ENCODE measurements at regions of chr1 and their contacts with region 1.

Region 1: DNA sequence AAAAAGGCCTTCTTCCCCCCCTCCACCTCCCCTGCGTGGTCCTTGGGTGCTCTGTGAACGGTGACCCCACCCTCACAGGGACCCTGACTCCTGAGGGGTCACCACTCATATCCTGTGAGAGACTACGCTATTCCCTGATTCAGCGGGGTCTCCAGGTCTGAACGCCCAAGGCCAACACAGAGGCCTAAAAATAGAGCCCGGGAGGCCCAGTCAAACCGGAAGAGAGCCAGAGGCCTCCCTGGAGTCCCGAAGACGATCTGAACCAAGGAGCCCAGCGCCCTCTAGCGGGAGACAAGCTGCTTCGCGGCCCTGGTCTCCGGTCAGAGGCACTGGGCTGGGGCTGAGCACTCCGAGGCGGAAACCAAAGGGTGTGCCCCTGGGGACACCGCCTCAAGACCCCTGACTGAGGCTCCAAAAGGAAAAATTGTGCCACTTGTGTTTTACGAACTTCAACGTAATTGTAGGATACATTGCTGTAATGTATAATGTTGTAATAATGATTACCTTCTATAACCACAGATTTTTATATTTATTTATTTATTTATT is 42.4 kb upstream of the PSEN2 start:
- DNase-seq: peak; percentile 82 to 94 (median 91)
- ATAC-seq: peak; percentile 99
- H3K4me3 ChIP-seq: peak overlapping the region; percentile 34
- H3K4me3 Mint-ChIP-seq: peak overlapping the region; percentile 35 to 79 (median 66)
- H3K27ac ChIP-seq: peak overlapping the region; percentile 59
- H3K27ac Mint-ChIP-seq: peak overlapping the region; percentile 80 to 95 (median 87)
- H3K4me1 ChIP-seq: peaks cover 9 to 11% of the 10 kb centered on the region in 2 donors
- H3K4me1 Mint-ChIP-seq: peaks cover 24 to 54% (median 45%) of the 10 kb centered on the region in 7 donors
- H3K27me3 ChIP-seq: no peaks in the 10 kb centered on the region
- H3K27me3 Mint-ChIP-seq: peaks cover 0 to 4% (median 0%) of the 10 kb centered on the region in 5 donors

Region 2: DNA sequence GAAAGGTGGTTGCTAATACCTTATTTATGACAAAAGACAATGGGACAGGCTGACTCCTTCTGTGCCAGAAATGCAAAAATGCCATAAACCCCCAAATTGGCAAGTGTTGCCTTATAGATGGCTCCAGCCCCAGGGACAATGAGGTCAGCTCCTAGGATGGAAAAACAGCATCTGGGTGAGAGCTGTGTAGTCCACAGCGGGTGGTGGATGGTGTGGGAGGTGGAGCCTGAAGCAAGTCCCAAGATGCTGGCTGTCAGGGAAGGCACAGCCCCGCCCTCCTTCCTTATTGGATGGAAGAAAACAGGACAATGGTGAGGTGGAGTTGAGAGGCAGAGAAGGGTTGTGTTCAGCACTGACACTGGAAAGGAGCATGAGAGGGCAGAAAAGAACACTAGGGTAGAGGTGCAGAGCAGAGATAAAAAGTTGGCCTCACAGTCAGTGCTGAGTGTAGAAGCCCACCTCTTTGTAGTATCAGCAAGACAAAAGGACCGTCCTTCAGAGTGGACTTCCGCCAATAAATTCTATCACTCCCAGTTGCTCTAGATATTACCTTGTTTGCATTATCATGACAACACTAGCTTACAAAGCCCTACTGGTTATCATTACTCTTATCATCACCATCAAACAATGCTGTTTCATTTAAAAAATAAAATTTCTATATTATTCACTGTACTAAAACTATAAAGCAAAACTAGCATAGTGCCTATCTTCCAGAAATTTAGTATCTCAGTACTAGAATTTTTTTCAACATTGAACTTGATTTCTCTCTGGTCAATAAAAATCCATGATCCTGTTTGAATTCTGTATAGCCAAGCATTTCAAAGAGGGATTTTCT is 825.2 kb before region 1 on chr1:
- CTCF ChIA-PET with region 1: no interaction called
- POLR2A ChIA-PET with region 1: no interaction called
- intact Hi-C with region 1: no loop called
- DNase-seq: peak in 1 of 9 donors; percentile 55
- ATAC-seq: no peak
- H3K4me3 ChIP-seq: peak overlapping the region; percentile 5
- H3K4me3 Mint-ChIP-seq: peak overlapping the region; percentile 37 to 94 (median 69)
- H3K27ac ChIP-seq: peak overlapping the region; percentile 98
- H3K27ac Mint-ChIP-seq: peak overlapping the region; percentile 90 to 100 (median 100)
- H3K4me1 ChIP-seq: peaks cover 32 to 53% of the 10 kb centered on the region in 2 donors
- H3K4me1 Mint-ChIP-seq: peaks cover 31 to 66% (median 49%) of the 10 kb centered on the region in 7 donors
- H3K27me3 ChIP-seq: no peaks in the 10 kb centered on the region
- H3K27me3 Mint-ChIP-seq: no peaks in the 10 kb centered on the region

Region 3: DNA sequence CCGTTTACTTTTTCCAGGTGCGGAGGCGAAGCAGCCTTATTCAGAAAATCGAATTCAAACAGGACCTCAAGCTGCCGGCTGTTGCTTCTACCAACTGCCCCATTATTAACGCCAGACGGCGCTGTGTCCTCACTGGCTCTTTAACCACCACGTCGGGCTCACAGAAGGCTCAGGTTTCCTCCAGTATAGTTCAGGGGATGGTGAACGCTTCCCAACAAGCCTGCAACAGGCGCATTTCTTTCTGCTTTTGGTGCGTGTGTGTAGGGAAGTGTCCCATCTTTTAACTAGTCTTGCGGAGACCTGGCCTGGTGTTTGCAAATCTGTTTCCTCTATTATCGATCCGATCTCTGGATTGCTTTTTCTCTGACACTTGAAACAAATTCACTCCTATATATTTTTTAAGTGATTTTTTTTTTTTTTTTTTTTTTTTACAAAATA is 280.3 kb before region 1 on chr1:
- CTCF ChIA-PET with region 1: no interaction called
- POLR2A ChIA-PET with region 1: no interaction called
- intact Hi-C with region 1: loop called in 1 of 2 experiments (anchors 5 kb)
- DNase-seq: peak in 8 of 9 donors; percentile 17 to 56 (median 50)
- ATAC-seq: peak; percentile 75
- H3K4me3 ChIP-seq: no peak overlapping the region
- H3K4me3 Mint-ChIP-seq: peak overlapping the region in 9 of 10 donors; percentile 17 to 70 (median 51)
- H3K27ac ChIP-seq: no peak overlapping the region
- H3K27ac Mint-ChIP-seq: no peak overlapping the region
- H3K4me1 ChIP-seq: peaks cover 15 to 17% of the 10 kb centered on the region in 2 donors
- H3K4me1 Mint-ChIP-seq: peaks cover 0 to 19% (median 10%) of the 10 kb centered on the region in 7 donors
- H3K27me3 ChIP-seq: no peaks in the 10 kb centered on the region
- H3K27me3 Mint-ChIP-seq: peaks cover 37 to 77% (median 39%) of the 10 kb centered on the region in 5 donors

Region 4: GRCh38 chr1:226634166-226634588 is 193.9 kb before region 1 on chr1:
- CTCF ChIA-PET with region 1: interaction called, 60 read pairs
- POLR2A ChIA-PET with region 1: interaction called, 5 read pairs
- intact Hi-C with region 1: loop called (anchors 1 kb)
- DNase-seq: peak; percentile 69 to 86 (median 79)
- ATAC-seq: peak; percentile 89
- H3K4me3 ChIP-seq: no peak overlapping the region
- H3K4me3 Mint-ChIP-seq: peak overlapping the region; percentile 10 to 90 (median 64)
- H3K27ac ChIP-seq: peak overlapping the region; percentile 54
- H3K27ac Mint-ChIP-seq: peak overlapping the region; percentile 76 to 98 (median 90)
- H3K4me1 ChIP-seq: peaks cover 26 to 48% of the 10 kb centered on the region in 2 donors
- H3K4me1 Mint-ChIP-seq: peaks cover 23 to 75% (median 61%) of the 10 kb centered on the region in 7 donors
- H3K27me3 ChIP-seq: no peaks in the 10 kb centered on the region
- H3K27me3 Mint-ChIP-seq: no peaks in the 10 kb centered on the region

Region 5: GRCh38 chr1:226687426-226687825 is 140.6 kb before region 1 on chr1:
- CTCF ChIA-PET with region 1: interaction called, 14 read pairs
- POLR2A ChIA-PET with region 1: interaction called, 4 read pairs
- intact Hi-C with region 1: loop called in 1 of 2 experiments (anchors 1 kb)
- DNase-seq: peak in 7 of 9 donors; percentile 22 to 69 (median 55)
- ATAC-seq: peak; percentile 55
- H3K4me3 ChIP-seq: no peak overlapping the region
- H3K4me3 Mint-ChIP-seq: peak overlapping the region; percentile 4 to 89 (median 66)
- H3K27ac ChIP-seq: peak overlapping the region; percentile 86
- H3K27ac Mint-ChIP-seq: peak overlapping the region; percentile 20 to 100 (median 99)
- H3K4me1 ChIP-seq: peaks cover 80 to 100% of the 10 kb centered on the region in 2 donors
- H3K4me1 Mint-ChIP-seq: peaks cover 86 to 100% (median 100%) of the 10 kb centered on the region in 7 donors
- H3K27me3 ChIP-seq: no peaks in the 10 kb centered on the region
- H3K27me3 Mint-ChIP-seq: no peaks in the 10 kb centered on the region

Region 6: GRCh38 chr1:226711976-226712741 is 115.9 kb before region 1 on chr1:
- CTCF ChIA-PET with region 1: interaction called, 5 read pairs
- POLR2A ChIA-PET with region 1: no interaction called
- intact Hi-C with region 1: loop called (anchors 1 kb)
- DNase-seq: peak in 7 of 9 donors; percentile 52 to 76 (median 61)
- ATAC-seq: peak; percentile 69
- H3K4me3 ChIP-seq: peak overlapping the region; percentile 43
- H3K4me3 Mint-ChIP-seq: peak overlapping the region; percentile 68 to 92 (median 82)
- H3K27ac ChIP-seq: peak overlapping the region; percentile 75
- H3K27ac Mint-ChIP-seq: peak overlapping the region; percentile 79 to 100 (median 95)
- H3K4me1 ChIP-seq: peaks cover 69 to 88% of the 10 kb centered on the region in 2 donors
- H3K4me1 Mint-ChIP-seq: peaks cover 72 to 100% (median 99%) of the 10 kb centered on the region in 7 donors
- H3K27me3 ChIP-seq: no peaks in the 10 kb centered on the region
- H3K27me3 Mint-ChIP-seq: no peaks in the 10 kb centered on the region

Region 7: GRCh38 chr1:227465256-227465655 is 637.2 kb after region 1 on chr1:
- CTCF ChIA-PET with region 1: no interaction called
- POLR2A ChIA-PET with region 1: no interaction called
- intact Hi-C with region 1: no loop called
- DNase-seq: no peak
- ATAC-seq: no peak
- H3K4me3 ChIP-seq: no peak overlapping the region
- H3K4me3 Mint-ChIP-seq: no peak overlapping the region
- H3K27ac ChIP-seq: no peak overlapping the region
- H3K27ac Mint-ChIP-seq: no peak overlapping the region
- H3K4me1 ChIP-seq: no peaks in the 10 kb centered on the region
- H3K4me1 Mint-ChIP-seq: peaks cover 0 to 1% (median 0%) of the 10 kb centered on the region in 7 donors
- H3K27me3 ChIP-seq: no peaks in the 10 kb centered on the region
- H3K27me3 Mint-ChIP-seq: peaks cover 0 to 19% (median 5%) of the 10 kb centered on the region in 5 donors